ENCODE measurements at regions of chr13 and their contacts with region 1.

Region 1: DNA sequence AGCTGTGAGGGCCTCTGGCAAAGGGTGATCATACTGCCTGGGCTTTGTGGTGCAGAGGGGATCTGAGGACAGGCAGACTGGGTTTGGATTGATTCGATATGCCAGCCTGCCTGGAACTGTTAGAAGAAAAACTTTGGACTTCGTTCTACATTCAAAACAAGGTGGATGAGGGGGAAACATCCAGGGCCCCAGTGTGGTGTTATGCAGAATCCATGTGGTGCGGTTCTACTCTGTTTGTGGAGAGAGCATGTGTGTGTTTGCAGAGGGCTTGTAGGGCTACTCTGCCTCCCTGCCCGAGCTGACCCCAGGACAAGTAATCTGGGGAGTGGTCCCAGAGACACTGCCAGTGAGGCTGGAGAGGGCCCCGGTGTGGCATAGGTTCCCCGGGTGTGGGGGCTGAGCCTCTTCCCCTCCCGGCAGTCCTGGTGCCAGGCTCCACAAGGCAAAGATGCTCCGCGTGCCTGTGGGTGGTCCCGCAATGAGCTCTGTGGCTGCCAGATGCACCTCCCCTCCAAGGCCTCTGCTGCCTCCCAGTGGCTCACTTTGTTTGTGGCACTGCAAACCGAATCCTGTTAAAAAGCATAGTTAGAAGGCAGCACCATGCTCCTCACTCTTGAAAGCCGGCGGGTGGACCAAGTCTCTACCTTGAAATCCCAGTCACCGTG is 22.3 kb upstream of the TFDP1 start:
- DNase-seq: peak; percentile 54
- H3K4me3 ChIP-seq: no peak overlapping the region
- H3K27ac ChIP-seq: no peak overlapping the region
- H3K4me1 ChIP-seq: no peaks in the 10 kb centered on the region
- CTCF ChIP-seq: peak; percentile 71

Region 2: GRCh38 chr13:112942689-112943308 is 619.4 kb before region 1 on chr13:
- CTCF ChIA-PET with region 1: no interaction called
- POLR2A ChIA-PET with region 1: no interaction called
- intact Hi-C with region 1: loop called (anchors 10 kb)
- DNase-seq: peak; percentile 90
- H3K4me3 ChIP-seq: peak overlapping the region; percentile 16
- H3K27ac ChIP-seq: peak overlapping the region; percentile 70
- H3K4me1 ChIP-seq: peaks cover 22% of the 10 kb centered on the region
- CTCF ChIP-seq: peak; percentile 81

Region 3: GRCh38 chr13:113458253-113459065 is 103.8 kb before region 1 on chr13:
- CTCF ChIA-PET with region 1: no interaction called
- POLR2A ChIA-PET with region 1: no interaction called
- intact Hi-C with region 1: loop called (anchors 1 kb)
- DNase-seq: no peak
- H3K4me3 ChIP-seq: no peak overlapping the region
- H3K27ac ChIP-seq: no peak overlapping the region
- H3K4me1 ChIP-seq: no peaks in the 10 kb centered on the region
- CTCF ChIP-seq: peak; percentile 47

Region 4: DNA sequence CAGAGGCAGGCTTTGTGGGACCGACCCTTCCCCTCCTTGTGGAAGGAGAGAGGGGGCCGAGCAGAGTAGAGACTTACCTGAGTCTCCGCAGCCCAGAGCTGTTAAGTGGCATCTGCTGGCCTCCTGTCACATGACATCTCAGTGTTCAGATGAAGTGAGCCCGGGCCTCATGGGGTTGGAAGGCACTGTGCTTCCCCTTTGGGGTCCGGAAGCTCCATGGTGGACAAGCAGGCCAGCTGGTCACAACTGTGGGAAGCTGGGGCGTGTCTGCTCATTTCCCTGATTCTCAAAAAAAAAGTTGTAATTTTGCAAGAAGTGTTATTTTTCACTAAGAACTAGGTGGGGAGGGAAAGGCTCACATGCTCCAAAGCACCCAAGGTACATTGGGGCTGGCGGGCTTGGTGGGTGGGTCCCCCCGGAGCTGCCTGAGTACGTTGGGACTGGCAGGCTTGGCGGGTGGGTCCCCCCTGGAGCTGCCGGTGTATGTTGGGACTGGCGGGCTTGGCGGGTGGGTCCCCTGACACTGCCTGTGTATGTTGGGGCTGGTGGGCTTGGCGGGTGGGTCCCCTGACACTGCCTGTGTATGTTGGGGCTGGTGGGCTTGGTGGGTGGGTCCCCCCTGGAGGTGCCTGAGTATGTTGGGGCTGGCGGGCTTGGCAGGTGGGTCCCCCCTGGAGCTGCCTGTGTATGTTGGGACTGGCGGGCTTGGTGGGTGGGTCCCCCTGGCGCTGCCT is 53.5 kb before region 1 on chr13:
- CTCF ChIA-PET with region 1: no interaction called
- POLR2A ChIA-PET with region 1: no interaction called
- intact Hi-C with region 1: no loop called
- DNase-seq: no peak
- H3K4me3 ChIP-seq: no peak overlapping the region
- H3K27ac ChIP-seq: no peak overlapping the region
- H3K4me1 ChIP-seq: no peaks in the 10 kb centered on the region
- CTCF ChIP-seq: no peak